ENCODE measurements at regions of chr7 and their contacts with region 1.

Region 1: DNA sequence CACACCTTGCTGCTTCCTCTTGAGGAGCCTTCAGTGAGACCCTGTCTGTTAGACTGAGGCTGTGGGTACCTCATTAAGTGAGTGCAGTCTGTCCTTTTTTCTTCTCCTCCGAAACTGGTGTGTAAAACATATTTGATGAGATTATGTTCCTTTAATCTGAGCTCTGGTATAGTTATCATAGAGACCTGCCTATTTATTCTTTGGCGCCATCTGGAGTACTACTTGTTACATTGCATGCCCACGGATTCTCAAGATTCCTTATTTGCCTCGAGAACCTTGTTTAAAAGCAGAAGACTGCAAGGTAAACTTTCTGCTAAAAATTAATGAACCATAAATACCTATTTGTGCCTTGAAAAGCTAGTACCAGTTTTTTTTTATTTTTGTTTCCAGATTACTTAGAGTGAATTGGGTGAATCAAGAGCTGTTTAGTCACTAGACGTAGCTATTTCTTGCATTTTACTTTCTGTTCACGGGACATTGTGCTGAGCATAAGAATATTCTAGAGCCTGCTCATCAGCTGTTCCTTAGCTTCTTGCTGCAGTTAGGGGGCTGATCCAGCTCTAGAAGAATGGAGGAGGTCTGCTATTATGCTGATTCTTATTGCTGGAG is 16.9 kb upstream of the STMP1 start:
- DNase-seq: peak; percentile 32
- H3K4me3 Mint-ChIP-seq: no peak overlapping the region
- H3K27ac Mint-ChIP-seq: no peak overlapping the region
- H3K4me1 Mint-ChIP-seq: no peaks in the 10 kb centered on the region
- H3K27me3 Mint-ChIP-seq: no peaks in the 10 kb centered on the region

Region 2: DNA sequence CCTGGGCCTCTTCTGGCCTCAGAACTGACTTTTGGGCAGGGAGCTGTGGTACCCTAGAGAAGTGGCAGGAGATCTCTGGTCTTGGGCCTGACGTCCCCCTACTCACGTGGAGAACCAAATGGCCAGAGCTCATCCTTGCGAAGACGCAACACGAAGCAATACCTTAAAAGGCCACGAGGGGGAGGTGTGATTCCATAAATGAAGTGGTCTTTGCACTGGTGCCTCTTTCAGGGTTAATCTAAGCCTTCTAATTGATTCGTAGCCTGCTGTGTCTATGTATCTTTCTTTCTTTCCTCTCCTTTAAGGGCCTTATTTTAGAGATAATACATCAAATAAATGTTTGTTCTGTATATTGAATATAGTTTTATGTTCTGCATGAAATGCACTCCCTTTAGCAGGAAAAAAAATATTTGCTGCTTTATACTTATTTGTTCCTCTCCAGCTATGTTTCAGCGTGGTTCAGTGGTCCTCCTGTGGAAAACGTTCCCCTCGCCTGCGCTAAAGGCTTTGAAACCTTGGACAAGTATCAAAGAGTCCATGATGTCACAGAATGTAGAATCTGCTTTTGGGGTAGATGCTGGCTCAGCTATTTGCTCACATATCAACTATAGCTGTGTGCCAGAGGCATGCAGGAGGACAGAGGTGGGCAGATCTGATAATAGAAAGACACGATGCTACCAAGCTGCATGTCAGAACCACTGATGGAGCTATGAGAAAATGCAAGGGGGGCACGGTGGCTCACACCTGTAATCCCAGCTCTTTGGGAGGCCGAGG is 370.7 kb before region 1 on chr7:
- CTCF ChIA-PET with region 1: interaction called, 32 read pairs
- DNase-seq: peak; percentile 81
- H3K4me3 Mint-ChIP-seq: no peak overlapping the region
- H3K27ac Mint-ChIP-seq: no peak overlapping the region
- H3K4me1 Mint-ChIP-seq: peaks cover 2% of the 10 kb centered on the region
- H3K27me3 Mint-ChIP-seq: peaks cover 18% of the 10 kb centered on the region

Region 3: GRCh38 chr7:135281363-135281949 is 363.9 kb before region 1 on chr7:
- CTCF ChIA-PET with region 1: interaction called, 32 read pairs
- DNase-seq: peak; percentile 88
- H3K4me3 Mint-ChIP-seq: no peak overlapping the region
- H3K27ac Mint-ChIP-seq: no peak overlapping the region
- H3K4me1 Mint-ChIP-seq: peaks cover 18% of the 10 kb centered on the region
- H3K27me3 Mint-ChIP-seq: peaks cover 5% of the 10 kb centered on the region

Region 4: DNA sequence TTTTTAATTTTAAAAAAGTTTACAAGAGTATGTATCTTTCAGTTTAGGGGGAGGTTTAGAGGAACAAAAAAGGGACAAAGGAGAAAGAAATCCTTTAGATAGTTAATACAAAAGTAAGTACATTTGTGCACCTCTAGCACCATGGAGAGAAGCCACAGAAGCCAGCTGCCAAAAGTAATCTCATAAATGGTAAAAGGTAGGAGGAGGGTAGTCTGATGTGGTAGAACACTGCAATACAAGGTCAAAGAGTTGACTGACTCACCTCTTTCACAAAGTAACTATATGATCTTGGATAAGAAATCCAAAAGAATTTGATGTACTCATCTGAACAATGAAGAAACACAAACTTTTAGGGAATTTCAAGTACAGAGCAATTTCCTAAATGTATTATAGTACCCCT is 203.6 kb before region 1 on chr7:
- CTCF ChIA-PET with region 1: no interaction called
- DNase-seq: no peak
- H3K4me3 Mint-ChIP-seq: no peak overlapping the region
- H3K27ac Mint-ChIP-seq: no peak overlapping the region
- H3K4me1 Mint-ChIP-seq: peaks cover 3% of the 10 kb centered on the region
- H3K27me3 Mint-ChIP-seq: no peaks in the 10 kb centered on the region

Region 5: GRCh38 chr7:135620980-135621850 is 24.2 kb before region 1 on chr7:
- CTCF ChIA-PET with region 1: interaction called, 11 read pairs
- DNase-seq: peak; percentile 29
- H3K4me3 Mint-ChIP-seq: no peak overlapping the region
- H3K27ac Mint-ChIP-seq: no peak overlapping the region
- H3K4me1 Mint-ChIP-seq: no peaks in the 10 kb centered on the region
- H3K27me3 Mint-ChIP-seq: no peaks in the 10 kb centered on the region

Region 6: GRCh38 chr7:135634191-135634878 is 11.1 kb before region 1 on chr7:
- CTCF ChIA-PET with region 1: interaction called, 23 read pairs
- DNase-seq: no peak
- H3K4me3 Mint-ChIP-seq: no peak overlapping the region
- H3K27ac Mint-ChIP-seq: no peak overlapping the region
- H3K4me1 Mint-ChIP-seq: no peaks in the 10 kb centered on the region
- H3K27me3 Mint-ChIP-seq: no peaks in the 10 kb centered on the region

Region 7: DNA sequence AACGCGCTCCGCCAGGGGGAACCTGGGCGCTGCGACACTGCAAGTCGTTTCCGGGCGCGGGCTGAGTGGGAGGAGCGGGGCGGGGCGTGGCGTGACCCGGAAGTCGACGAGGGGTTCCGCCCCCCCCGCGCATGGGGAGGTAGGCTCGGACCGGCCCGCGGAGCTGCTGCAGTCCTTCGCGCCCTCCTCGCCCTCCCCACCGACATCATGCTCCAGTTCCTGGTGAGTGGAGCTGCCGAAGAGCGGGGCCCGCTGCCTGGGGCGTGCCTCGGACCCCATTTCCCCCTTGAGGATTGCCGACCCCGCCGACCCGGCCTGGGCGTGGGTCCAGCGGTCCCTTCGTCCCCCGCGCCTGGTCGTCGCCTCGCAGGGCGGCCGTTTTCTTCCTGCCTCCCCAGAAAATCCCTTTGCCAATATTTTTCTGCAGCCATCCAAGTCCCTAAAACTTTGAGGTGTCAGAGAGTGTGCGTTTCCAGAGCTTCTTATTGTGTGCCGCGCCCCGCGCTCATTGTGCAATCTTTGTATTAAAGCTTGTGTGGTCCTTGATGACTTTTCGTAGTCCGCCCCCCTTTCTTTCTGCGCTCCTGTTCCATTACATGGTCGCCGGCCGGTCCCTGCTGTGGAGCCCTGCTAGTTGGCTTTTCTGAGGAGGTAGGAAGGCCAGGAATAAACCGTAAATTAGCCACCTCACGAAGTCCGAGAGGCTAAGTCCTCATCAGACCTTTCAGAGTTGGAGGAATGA is 17.1 kb after region 1 on chr7 and contains the start of gene STMP1:
- CTCF ChIA-PET with region 1: interaction called, 20 read pairs
- DNase-seq: peak; percentile 96
- H3K4me3 Mint-ChIP-seq: peak within 1 kb of the TSS; percentile 87
- H3K27ac Mint-ChIP-seq: peak within 1 kb of the TSS; percentile 84
- H3K4me1 Mint-ChIP-seq: peaks cover 34% of the 10 kb centered on the region
- H3K27me3 Mint-ChIP-seq: no peaks in the 10 kb centered on the region

Region 8: GRCh38 chr7:135801045-135801693 is 155.8 kb after region 1 on chr7:
- CTCF ChIA-PET with region 1: no interaction called
- DNase-seq: peak; percentile 24
- H3K4me3 Mint-ChIP-seq: no peak overlapping the region
- H3K27ac Mint-ChIP-seq: no peak overlapping the region
- H3K4me1 Mint-ChIP-seq: no peaks in the 10 kb centered on the region
- H3K27me3 Mint-ChIP-seq: peaks cover 10% of the 10 kb centered on the region